Pancreas (tissue), 10 donors: ENCODE measurements at regions of chr12 and their contacts with region 1.

Region 1: DNA sequence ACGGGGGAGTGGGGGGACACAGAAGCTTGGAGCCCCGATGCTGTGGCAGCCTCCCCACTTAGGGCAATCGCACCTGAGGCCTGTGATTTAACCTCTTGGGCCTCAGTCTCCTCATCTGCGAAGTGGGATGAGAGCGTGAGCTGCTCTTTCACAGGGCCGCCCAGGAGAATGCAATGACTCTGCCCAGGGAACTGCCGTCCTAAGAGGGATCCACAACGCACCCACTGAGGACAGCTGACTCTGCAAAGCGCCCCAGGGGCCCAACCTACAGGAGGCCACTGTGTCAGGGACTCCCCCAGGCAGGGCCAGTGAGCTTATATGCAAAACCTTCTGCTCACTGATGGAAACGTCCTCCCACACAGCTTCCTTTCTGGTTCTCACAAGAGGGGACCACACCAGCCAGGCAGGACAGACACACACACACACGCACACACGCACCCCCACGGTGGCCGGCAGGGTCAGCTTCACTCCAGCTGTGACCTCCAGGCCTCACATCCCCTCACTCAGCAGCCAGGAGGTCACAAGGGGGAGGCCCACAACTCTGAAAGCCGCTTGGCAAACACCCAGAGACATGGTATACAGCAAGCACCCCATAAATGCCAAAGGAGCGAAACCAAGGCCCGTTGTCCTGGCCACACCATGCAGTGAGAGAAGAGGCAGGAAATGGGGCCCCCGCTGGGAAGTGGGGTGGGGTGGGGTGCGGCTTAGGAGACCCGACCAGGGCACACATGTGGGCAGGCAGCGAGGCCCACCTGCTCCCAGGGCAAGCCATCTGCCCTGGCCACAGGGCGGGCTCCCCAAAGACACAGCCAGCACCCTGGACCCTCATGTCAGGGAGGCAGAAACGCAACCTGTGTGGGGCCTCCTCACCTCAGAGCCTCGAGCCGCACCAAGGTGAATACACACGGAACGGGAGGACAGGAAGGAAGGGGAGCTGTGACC is 73.3 kb downstream of the NCOR2 start:
- DNase-seq: peak in 1 of 6 donors; percentile 64
- ATAC-seq: no peak
- H3K4me3 ChIP-seq: no peak overlapping the region
- H3K27ac ChIP-seq: no peak overlapping the region
- H3K4me1 ChIP-seq: peaks cover 32 to 39% (median 33%) of the 10 kb centered on the region in 3 donors
- H3K27me3 ChIP-seq: no peaks in the 10 kb centered on the region
- CTCF ChIP-seq: no peak

Region 2: GRCh38 chr12:124388679-124389536 is 105.2 kb before region 1 on chr12:
- intact Hi-C with region 1: loop called in 1 of 3 experiments (anchors 10 kb)
- DNase-seq: peak; percentile 85 to 96 (median 91)
- ATAC-seq: peak; percentile 66 to 74 (median 70)
- H3K4me3 ChIP-seq: peak overlapping the region; percentile 35 to 70 (median 55)
- H3K27ac ChIP-seq: peak overlapping the region; percentile 80 to 90 (median 86)
- H3K4me1 ChIP-seq: peaks cover 16 to 48% (median 36%) of the 10 kb centered on the region in 3 donors
- H3K27me3 ChIP-seq: no peaks in the 10 kb centered on the region
- CTCF ChIP-seq: no peak

Region 3: GRCh38 chr12:124754949-124755800 is 261.1 kb after region 1 on chr12:
- intact Hi-C with region 1: loop called in 1 of 3 experiments (anchors 10 kb)
- DNase-seq: peak in 3 of 6 donors; percentile 53 to 72 (median 57)
- ATAC-seq: peak; percentile 29 to 81 (median 78)
- H3K4me3 ChIP-seq: no peak overlapping the region
- H3K27ac ChIP-seq: peak overlapping the region in 3 of 4 donors; percentile 51 to 60 (median 58)
- H3K4me1 ChIP-seq: peaks cover 0 to 10% (median 7%) of the 10 kb centered on the region in 3 donors
- H3K27me3 ChIP-seq: no peaks in the 10 kb centered on the region
- CTCF ChIP-seq: no peak